Lower leg skin (tissue), 4 donors: ENCODE measurements at regions of chr15 and their contacts with region 1.

Region 1: DNA sequence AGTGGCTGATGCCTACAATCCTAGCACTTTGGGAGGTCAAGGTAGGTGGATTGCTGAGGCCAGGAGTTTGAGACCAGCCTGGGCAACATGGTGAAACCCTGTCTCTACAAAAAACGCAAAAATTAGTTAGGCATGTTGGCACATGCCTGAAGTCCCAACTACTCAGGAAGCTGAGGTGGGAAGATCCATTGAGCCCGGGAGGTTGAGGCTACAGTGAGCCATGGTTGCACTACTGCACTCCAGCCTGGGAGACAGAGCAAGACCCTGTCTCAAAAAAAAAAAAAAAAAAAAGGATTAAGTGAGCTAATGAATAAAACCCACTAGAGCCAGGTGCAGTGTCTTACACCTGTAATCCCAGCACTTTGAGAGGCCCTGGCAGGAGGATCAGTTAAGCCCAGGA is 6.7 kb upstream of the SEC11A start:
- DNase-seq: peak in 1 of 2 donors; percentile 37
- H3K4me3 ChIP-seq: no peak overlapping the region
- CTCF ChIP-seq: no peak
- POLR2A ChIP-seq: no peak

Region 2: DNA sequence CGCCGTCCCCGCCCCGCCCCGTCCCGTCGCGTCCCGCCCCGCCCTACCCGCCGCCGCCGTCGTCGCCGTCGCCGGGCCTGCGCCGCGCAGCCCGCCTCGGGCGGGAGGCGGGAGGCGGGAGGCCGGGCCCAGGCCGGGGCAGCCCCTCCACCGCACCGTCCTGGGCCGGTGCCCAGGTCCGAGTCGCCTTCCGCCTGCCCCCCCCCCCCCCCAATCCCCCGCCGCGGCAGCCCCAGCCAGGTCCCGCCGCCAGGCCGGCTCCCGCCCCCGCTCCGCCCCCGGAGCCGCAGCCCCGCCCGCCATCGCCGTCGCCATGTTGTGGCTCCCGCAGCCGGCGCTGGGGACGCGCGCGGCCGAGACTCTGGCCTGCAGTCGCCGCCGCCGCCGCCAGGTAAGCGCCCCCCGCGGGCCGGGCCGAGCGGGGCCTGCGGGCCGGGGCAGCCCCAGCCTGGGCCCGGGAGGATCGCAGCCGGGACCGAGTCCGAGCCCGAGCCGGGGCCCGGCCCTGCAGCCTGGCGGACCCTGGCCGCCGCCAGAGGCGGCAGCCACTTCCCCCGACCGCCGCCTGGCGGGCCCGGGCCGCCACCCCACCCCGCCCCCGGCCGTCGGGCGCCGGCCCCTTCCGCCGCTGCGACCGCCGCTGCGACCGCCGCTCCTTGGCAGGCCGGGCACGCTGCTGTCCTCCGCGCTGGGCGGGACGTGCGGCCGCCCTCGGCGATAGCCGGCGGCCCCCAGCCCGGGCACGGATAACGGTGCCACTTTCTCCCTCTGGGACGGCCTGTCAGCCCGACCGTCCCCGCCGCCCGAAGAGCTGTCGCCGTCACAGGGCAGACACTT is 25.9 kb after region 1 on chr15 and contains the start of gene ZNF592:
- intact Hi-C with region 1: loop called (anchors 1 kb)
- DNase-seq: peak; percentile 53 to 96
- H3K4me3 ChIP-seq: peak within 1 kb of the TSS; percentile 83
- CTCF ChIP-seq: no peak
- POLR2A ChIP-seq: no peak
- total RNA-seq, gene ZNF592: 15.8 to 25.5 (median 21.1) TPM

Region 3: GRCh38 chr15:85005319-85005718 is 282.7 kb after region 1 on chr15:
- intact Hi-C with region 1: no loop called
- DNase-seq: no peak
- H3K4me3 ChIP-seq: no peak overlapping the region
- CTCF ChIP-seq: no peak
- POLR2A ChIP-seq: no peak